ENCODE measurements at regions of chr12 and their contacts with region 1.

Region 1: DNA sequence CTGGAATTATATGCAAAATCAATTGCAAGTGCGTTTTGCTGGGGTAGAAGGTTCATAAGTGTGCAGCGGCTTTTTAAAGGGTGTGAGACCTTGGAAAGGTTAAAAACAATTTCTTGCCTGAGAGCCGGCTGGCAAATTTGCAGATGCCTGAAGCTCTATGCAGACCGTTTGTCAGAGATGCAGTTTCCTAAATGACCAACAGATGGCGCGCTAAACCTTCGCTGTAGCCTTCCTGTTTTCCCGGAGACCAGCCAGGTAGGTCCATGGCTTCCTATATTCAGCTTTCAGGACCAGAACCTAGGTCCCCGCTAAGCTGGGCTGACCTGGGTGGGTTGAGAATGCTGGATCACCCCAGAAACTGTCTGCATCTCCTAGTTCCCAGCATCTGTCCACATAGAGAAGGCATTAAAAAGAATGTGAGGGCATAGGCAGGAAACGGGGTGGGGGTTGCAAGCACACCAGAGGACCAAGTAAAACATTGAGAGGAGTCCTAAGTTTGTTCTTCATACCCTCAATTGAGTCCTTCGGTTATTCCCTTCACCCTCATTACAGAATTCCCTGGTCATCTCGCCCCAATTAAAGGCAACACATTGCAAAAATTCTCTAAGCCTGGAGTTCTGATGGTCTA is 5.7 kb upstream of the NOS1 start:
- DNase-seq: peak; percentile 88
- H3K4me3 ChIP-seq: no peak overlapping the region
- H3K27ac ChIP-seq: no peak overlapping the region
- H3K4me1 ChIP-seq: no peaks in the 10 kb centered on the region
- H3K27me3 ChIP-seq: no peaks in the 10 kb centered on the region
- CTCF ChIP-seq: peak; percentile 74 to 93 (median 90)
- POLR2A ChIP-seq: no peak

Region 2: DNA sequence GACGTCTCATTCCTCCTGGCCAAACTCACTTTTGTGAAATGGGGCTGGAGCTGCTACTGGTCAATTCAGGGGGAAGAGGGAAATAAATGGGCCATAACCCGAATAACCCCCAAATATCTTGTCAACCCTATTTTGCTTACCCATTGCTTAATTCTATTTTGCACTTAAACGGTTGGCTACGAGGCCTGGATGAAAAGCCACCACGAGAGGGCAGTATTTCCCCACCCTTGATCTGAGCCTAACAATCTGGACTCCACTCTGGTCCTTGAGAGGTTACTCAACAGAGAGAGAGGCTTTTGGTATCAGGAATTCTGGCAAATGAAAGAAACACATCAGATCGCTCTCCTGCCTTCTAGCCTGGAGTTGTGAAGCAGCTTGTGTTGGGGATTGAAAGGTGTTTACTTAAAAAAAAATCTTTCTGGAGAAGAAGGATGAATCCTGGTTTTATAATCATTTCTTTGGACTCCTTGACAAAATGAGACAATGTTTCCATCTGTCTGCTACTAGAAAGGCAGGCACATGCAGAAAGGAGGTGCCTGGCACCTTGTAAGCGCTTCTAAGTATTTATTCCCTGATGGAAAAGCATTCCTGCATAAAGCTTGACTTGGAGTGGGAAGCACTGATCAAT is 154.4 kb before region 1 on chr12:
- intact Hi-C with region 1: loop called (anchors 10 kb)
- DNase-seq: peak; percentile 70
- H3K4me3 ChIP-seq: no peak overlapping the region
- H3K27ac ChIP-seq: no peak overlapping the region
- H3K4me1 ChIP-seq: no peaks in the 10 kb centered on the region
- H3K27me3 ChIP-seq: no peaks in the 10 kb centered on the region
- CTCF ChIP-seq: peak; percentile 75 to 85 (median 82)
- POLR2A ChIP-seq: no peak

Region 3: GRCh38 chr12:117587631-117588287 is 220.6 kb after region 1 on chr12:
- intact Hi-C with region 1: loop called (anchors 1 kb)
- DNase-seq: peak; percentile 50
- H3K4me3 ChIP-seq: no peak overlapping the region
- H3K27ac ChIP-seq: no peak overlapping the region
- H3K4me1 ChIP-seq: no peaks in the 10 kb centered on the region
- H3K27me3 ChIP-seq: no peaks in the 10 kb centered on the region
- CTCF ChIP-seq: peak; percentile 60 to 89 (median 82)
- POLR2A ChIP-seq: no peak

Region 4: GRCh38 chr12:117836999-117837736 is 470.0 kb after region 1 on chr12:
- intact Hi-C with region 1: loop called (anchors 2 kb)
- DNase-seq: peak; percentile 79
- H3K4me3 ChIP-seq: no peak overlapping the region
- H3K27ac ChIP-seq: no peak overlapping the region
- H3K4me1 ChIP-seq: no peaks in the 10 kb centered on the region
- H3K27me3 ChIP-seq: no peaks in the 10 kb centered on the region
- CTCF ChIP-seq: peak; percentile 93 to 98 (median 96)
- POLR2A ChIP-seq: no peak